Endothelial cell of umbilical vein (primary cell): ENCODE measurements at regions of chr3 and their contacts with region 1.

Region 1: DNA sequence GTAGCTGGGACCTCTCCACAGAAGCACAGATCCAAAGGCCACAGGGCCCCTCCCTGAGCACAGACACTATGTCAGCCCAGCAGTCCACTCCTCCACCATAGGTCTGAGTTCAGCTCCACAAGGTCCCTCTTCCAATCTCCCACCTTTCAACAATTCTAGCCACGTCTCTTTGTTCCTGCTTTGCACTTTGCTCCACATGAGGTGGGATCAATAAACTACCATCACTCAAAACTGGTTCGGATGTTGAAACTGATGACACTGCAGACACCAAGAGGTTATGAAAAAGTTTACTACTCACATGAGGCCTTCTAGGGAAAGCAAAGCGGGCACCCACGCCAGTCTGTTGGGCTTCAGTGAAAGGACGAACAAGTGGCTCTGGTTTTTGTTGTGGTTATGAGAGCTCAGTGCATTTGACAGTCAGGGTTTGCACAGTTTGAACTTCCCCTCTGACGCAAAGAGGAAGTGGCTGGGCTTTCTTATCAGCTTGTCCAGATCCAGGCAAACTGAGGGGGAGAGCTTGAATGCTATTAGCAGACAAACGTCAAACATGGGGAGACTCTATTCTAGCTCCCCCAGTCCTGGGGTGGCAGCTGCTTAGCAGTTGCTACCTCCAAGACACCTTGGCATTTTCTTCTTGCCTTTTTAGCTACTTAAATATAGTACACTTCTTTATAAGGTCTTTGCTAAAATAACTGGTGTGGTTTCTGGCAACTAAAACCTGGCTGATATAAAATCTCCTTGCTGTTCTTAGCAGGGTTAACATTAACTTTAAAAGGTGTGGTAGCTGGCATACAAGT is 37.8 kb downstream of the ZNF445 start:
- DNase-seq: peak; percentile 97
- H3K4me3 ChIP-seq: no peak overlapping the region
- H3K27ac ChIP-seq: peak overlapping the region; percentile 96
- H3K4me1 ChIP-seq: peaks cover 16% of the 10 kb centered on the region
- H3K27me3 ChIP-seq: no peaks in the 10 kb centered on the region
- CTCF ChIP-seq: no peak
- POLR2A ChIP-seq: peak; percentile 33

Region 2: GRCh38 chr3:44104668-44105321 is 334.9 kb before region 1 on chr3:
- CTCF ChIA-PET with region 1: no interaction called
- POLR2A ChIA-PET with region 1: no interaction called
- dilution Hi-C with region 1: no loop called
- intact Hi-C with region 1: no loop called
- DNase-seq: no peak
- H3K4me3 ChIP-seq: no peak overlapping the region
- H3K27ac ChIP-seq: no peak overlapping the region
- H3K4me1 ChIP-seq: no peaks in the 10 kb centered on the region
- H3K27me3 ChIP-seq: peaks cover 2 to 3% of the 10 kb centered on the region in 2 experiments
- CTCF ChIP-seq: no peak
- POLR2A ChIP-seq: no peak

Region 3: GRCh38 chr3:44510000-44510368 is 70.3 kb after region 1 on chr3:
- CTCF ChIA-PET with region 1: no interaction called
- POLR2A ChIA-PET with region 1: no interaction called
- dilution Hi-C with region 1: no loop called
- intact Hi-C with region 1: loop called (anchors 1 kb)
- DNase-seq: peak; percentile 49
- H3K4me3 ChIP-seq: peak overlapping the region; percentile 80 to 98 (median 88)
- H3K27ac ChIP-seq: peak overlapping the region; percentile 58
- H3K4me1 ChIP-seq: peaks cover 13% of the 10 kb centered on the region
- H3K27me3 ChIP-seq: no peaks in the 10 kb centered on the region
- CTCF ChIP-seq: no peak
- POLR2A ChIP-seq: no peak

Region 4: GRCh38 chr3:44624749-44625480 is 185.2 kb after region 1 on chr3 and contains the start of gene ZNF197:
- CTCF ChIA-PET with region 1: no interaction called
- POLR2A ChIA-PET with region 1: no interaction called
- dilution Hi-C with region 1: no loop called
- intact Hi-C with region 1: no loop called
- DNase-seq: peak; percentile 70
- H3K4me3 ChIP-seq: peak within 1 kb of the TSS; percentile 13 to 69 (median 62)
- H3K27ac ChIP-seq: peak within 1 kb of the TSS; percentile 3
- H3K4me1 ChIP-seq: peaks cover 4% of the 10 kb centered on the region
- H3K27me3 ChIP-seq: no peaks in the 10 kb centered on the region
- CTCF ChIP-seq: no peak
- POLR2A ChIP-seq: peak; percentile 80
- total RNA-seq, gene ZNF197: 6.4 and 7.1 TPM in 2 replicates